ENCODE measurements at regions of chr12 and their contacts with region 1.

Region 1: DNA sequence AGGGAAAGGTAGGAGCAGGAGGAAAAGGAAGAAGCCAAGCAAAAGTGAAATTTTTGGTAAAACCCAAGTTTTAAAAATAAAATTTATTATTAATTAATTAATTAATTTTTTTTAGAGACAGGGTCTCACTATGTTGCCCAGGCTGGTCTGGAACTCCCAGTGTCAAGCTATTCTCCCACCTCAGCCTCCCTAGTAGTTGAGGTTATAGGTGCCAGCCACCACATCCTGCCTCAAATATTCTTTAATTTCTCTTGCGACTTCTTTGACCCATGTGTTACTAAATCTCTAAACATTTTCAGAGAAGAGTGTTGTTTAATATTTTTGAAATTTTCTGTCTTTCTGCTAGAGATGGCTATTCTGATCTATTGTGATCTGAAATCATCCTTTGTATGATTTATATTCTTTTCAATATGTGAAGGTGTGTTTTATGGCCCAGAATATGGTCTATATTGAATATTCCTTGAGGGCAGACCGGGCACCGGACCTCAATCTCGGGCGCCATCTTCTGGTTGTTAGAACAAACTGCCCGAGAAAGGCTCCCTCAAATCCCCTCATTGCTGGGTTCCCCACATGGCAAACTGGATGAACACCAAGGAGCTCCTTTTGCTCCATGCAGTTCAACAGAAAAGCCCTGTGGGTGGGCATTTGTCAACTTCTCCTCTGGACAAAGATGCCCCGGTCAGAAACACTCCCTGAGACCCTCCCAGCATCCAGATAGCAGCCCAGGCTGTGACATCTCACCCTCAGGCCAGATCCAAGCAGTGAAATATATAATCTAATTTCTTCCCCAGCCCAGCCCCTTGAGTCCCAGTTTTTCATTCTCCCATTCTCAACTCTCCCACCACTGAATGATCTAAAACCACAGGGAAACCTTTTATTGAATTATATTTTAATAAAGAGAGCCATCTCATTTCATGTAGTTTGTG is 110.5 kb downstream of the ASCL4 start:
- DNase-seq: no peak
- H3K4me3 ChIP-seq: no peak overlapping the region
- H3K27ac ChIP-seq: no peak overlapping the region
- H3K4me1 ChIP-seq: no peaks in the 10 kb centered on the region
- H3K27me3 ChIP-seq: peaks cover 0 to 17% (median 0%) of the 10 kb centered on the region in 7 donors
- CTCF ChIP-seq: peak; percentile 47 to 83 (median 66)
- POLR2A ChIP-seq: no peak

Region 2: DNA sequence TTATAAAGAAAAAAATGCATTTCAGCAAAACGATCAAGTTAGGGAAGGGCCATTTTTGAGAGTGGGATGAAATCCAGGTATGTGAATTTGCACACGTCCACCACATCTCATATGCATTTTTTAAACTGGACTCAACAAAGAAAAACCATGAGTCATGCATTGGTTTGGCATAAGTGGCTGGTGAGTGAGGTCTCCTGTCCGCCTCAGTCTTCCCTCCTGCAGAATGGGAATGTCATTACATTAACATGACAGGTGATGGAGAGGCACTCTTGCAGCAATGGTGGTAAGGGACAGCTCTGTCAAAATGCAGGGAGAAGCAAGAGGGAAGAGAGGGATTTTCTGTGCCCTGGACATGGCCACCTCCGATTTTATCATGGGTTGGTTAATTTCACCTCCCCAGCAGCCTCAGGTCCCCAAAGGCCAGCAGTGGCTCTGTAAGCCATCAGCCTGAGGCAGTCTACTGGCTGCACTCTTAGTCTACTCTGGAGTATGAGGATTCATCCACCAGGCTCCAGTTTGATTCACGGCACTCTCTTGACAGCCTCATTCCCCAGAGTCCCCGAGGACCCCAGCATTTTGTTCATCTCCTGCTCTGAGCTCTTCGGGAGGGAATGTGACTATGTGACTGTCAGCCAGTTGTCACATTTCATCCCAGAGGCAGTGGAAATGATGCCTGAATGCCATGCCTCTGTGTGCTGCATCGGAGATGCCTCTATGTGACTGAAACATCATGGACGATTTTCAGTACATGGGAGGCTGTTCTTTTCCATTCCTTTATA is 216.5 kb before region 1 on chr12:
- intact Hi-C with region 1: loop called (anchors 5 kb)
- DNase-seq: no peak
- H3K4me3 ChIP-seq: no peak overlapping the region
- H3K27ac ChIP-seq: no peak overlapping the region
- H3K4me1 ChIP-seq: no peaks in the 10 kb centered on the region
- H3K27me3 ChIP-seq: peaks cover 0 to 56% (median 9%) of the 10 kb centered on the region in 7 donors
- CTCF ChIP-seq: no peak
- POLR2A ChIP-seq: no peak

Region 3: DNA sequence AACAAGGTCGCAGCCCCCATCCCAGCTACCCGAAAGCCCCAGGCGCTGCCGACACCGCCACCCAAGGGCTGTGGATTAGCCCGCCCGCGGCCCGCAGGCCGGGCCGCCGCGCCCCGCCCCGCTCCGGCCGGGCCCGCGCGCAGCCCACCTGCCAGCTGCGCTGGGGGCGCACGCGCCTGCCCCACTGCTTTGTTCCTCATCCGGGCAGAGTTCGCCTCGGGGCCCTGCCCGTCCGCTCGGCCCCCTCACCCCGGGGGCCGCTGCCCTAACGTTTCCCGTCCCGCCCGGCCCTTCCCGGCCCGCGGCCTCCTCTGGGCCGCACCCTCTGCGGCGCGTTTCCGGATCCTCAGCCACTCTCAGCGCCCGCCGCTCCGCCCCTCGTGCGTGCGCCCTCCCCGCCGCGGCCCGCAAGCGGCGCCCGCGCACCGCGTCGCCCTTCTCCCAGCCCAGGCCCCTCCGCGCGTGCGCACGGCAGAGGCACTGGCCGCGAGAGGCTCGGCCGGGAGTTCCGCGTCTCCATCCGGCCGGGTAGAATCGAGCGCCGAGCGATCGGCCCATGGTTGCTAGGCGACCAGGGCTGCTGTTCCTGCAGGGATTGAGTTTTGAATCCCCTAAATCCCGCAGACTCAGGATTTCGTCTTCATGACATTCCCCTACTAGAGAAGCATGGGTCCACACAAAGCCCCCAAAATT is 124.1 kb before region 1 on chr12 and contains the start of gene PRDM4:
- intact Hi-C with region 1: loop called (anchors 5 kb)
- DNase-seq: peak; percentile 98
- H3K4me3 ChIP-seq: peak within 1 kb of the TSS; percentile 56 to 90 (median 84)
- H3K27ac ChIP-seq: peak within 1 kb of the TSS; percentile 50 to 91 (median 81)
- H3K4me1 ChIP-seq: peaks cover 16 to 50% (median 39%) of the 10 kb centered on the region in 6 donors
- H3K27me3 ChIP-seq: no peaks in the 10 kb centered on the region
- CTCF ChIP-seq: peak in 7 of 11 experiments; percentile 24 to 76 (median 66)
- POLR2A ChIP-seq: peak; percentile 48 to 88 (median 84)
- total RNA-seq, gene PRDM4: 24.9 to 38.4 (median 30.0) TPM